ENCODE measurements at regions of chr1 and their contacts with region 1.

Region 1: DNA sequence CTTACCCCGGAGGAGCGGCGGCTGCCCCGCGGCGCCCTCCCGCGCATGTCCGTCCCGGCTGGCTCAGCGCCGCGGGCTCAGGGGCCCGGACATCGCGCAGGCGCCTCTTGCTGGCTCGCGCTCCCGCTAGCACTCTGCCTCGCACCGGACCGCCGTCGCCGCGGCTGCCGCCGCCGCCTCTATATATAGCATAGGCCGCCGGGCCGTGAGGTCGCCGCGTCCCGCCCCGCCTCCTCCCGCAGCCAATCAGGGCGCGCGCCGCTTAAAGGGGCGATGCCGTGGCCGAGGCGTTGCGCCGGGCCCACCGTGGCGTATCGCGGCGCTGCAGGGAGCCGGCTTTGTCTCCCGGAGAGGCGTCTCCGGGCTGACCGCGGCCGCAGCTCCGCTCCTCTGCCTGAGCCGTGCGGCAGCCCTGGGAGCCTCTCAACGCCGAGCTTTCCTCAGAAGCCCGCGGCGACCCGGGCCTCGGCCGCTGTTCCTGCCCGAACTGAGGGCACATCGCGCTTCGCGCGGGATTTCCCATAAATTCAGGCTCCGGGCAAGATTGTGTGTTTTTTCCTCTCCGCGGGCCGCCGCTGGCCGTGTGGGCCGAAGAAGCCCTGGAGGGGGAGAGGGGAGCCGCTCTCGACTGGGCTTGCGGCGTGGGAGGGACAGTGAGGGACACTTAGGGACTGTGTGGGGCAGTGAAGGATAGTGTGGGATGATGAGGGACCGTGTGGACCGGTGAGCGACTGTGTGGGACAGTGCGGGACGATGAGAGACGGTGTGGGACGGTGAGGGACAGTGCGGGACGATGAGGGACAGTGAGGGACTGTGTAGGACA is at the start of gene ERRFI1:
- DNase-seq: peak; percentile 94
- H3K4me3 ChIP-seq: peak within 1 kb of the TSS; percentile 81 to 98 (median 94)
- H3K27ac ChIP-seq: peak within 1 kb of the TSS; percentile 63
- H3K4me1 ChIP-seq: peaks cover 57% of the 10 kb centered on the region
- H3K27me3 ChIP-seq: no peaks in the 10 kb centered on the region
- CTCF ChIP-seq: no peak
- POLR2A ChIP-seq: peak; percentile 99
- total RNA-seq, gene ERRFI1: 28.1 and 31.2 TPM in 2 replicates

Region 2: DNA sequence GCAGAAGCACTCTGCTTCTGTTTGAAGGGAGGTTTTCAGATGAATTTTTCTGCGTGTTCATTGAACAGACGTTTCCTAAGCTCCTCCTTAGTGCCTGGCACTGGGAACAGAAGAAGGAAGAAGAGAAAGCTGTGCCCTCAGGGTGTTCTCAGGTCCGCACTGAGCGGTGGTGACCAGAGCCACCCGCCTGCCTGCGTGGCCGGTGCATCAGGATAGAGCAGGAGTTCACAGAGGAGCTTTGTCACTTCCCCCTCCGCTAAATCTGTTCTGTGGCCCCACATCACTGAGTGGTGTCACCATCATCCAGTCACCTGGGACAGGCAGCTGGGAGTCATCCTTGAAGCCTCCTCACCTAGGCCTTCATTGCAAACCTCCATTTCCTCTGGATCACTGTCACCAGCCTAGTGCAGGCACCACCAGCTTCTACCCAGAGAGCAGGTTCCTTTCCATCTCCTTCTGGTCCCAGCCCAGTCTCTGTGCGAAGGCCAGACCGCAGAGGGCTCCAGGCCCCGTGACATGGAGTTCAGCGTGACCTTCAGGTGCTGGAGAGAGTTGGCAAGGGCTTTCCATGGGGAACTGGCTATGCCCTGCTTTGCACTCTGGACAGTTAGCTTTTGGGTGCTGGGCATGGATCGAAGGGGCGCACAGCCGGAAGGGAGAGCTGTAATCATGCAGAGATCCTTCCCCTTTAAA is 43.1 kb before region 1 on chr1:
- CTCF ChIA-PET with region 1: interaction called, 3 read pairs
- POLR2A ChIA-PET with region 1: no interaction called
- dilution Hi-C with region 1: no loop called
- intact Hi-C with region 1: loop called (anchors 2 kb)
- DNase-seq: no peak
- H3K4me3 ChIP-seq: no peak overlapping the region
- H3K27ac ChIP-seq: no peak overlapping the region
- H3K4me1 ChIP-seq: no peaks in the 10 kb centered on the region
- H3K27me3 ChIP-seq: no peaks in the 10 kb centered on the region
- CTCF ChIP-seq: no peak
- POLR2A ChIP-seq: no peak

Region 3: DNA sequence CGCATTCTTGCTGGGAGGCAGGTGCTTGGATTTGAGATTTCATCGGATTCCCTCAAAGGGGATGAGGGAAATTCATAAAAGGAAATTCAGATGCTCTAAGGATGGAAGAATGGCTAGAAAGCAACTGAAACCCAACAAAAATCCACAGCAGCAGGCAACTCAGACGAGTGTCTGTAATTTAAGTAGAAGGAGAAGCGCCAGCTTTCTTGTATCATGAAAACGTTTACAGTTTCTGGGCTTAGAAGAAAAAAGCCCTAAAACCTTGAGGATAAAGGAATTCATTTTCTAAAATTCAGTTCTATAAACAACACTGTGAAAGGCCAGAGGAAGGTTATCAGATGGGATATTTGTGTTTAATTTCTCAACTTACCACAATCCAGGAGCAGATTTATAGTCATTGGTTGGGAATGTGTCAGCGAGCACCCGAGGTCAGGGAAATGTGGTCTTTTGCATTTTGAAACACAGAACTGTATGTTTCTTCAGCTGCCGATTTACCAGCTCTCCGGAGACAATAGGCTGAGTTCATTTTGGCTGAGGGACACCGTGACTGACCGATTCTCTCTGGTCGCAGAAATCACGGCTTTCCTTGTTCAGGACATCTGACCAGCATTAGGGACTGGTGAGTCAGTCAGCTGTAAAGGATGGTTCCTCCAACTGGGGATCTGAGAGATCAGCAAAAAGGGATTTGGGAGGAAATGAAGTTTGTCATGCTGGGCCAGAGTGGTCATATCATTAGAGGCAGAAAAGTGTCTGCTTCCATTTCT is 111.3 kb after region 1 on chr1:
- CTCF ChIA-PET with region 1: interaction called, 5 read pairs
- POLR2A ChIA-PET with region 1: no interaction called
- dilution Hi-C with region 1: no loop called
- intact Hi-C with region 1: loop called (anchors 5 kb)
- DNase-seq: peak; percentile 97
- H3K4me3 ChIP-seq: no peak overlapping the region
- H3K27ac ChIP-seq: peak overlapping the region; percentile 81
- H3K4me1 ChIP-seq: peaks cover 39% of the 10 kb centered on the region
- H3K27me3 ChIP-seq: no peaks in the 10 kb centered on the region
- CTCF ChIP-seq: no peak
- POLR2A ChIP-seq: no peak

Region 4: GRCh38 chr1:8238851-8239305 is 212.5 kb after region 1 on chr1:
- CTCF ChIA-PET with region 1: interaction called, 11 read pairs
- POLR2A ChIA-PET with region 1: no interaction called
- dilution Hi-C with region 1: no loop called
- intact Hi-C with region 1: loop called (anchors 1 kb)
- DNase-seq: peak; percentile 33
- H3K4me3 ChIP-seq: no peak overlapping the region
- H3K27ac ChIP-seq: peak overlapping the region; percentile 36
- H3K4me1 ChIP-seq: peaks cover 25% of the 10 kb centered on the region
- H3K27me3 ChIP-seq: no peaks in the 10 kb centered on the region
- CTCF ChIP-seq: peak; percentile 6 to 21
- POLR2A ChIP-seq: no peak